ENCODE measurements at regions of chr15 and their contacts with region 1.

Region 1: DNA sequence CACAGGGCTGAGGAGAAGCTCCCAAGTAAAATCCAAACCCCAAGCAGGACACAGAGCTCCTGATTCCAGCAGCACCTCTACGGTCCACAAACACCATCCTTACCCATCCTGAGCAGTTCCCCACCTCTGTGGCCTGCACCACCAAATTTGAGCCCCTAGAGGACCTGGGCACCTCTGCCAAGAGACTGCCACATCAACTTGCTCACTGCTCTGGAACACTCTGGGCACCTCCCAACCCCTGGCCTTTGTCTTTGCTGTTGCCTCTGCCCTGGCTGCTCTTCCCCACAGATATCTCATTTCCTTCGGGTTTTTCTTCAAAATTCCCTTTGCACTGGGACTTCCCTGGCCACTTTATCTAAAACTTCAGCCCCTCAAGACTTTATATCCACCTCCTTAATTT is 5.8 kb downstream of the RLBP1 start:
- DNase-seq: no peak

Region 2: GRCh38 chr15:89171136-89172072 is 44.2 kb before region 1 on chr15:
- in situ Hi-C with region 1: no loop called
- DNase-seq: peak; percentile 66

Region 3: GRCh38 chr15:89278307-89278706 is 62.7 kb after region 1 on chr15:
- in situ Hi-C with region 1: loop called (anchors 5 kb)
- DNase-seq: no peak